Right ventricle myocardium superior (tissue), 1 donor: ENCODE measurements at regions of chrX and their contacts with region 1.

Region 1: DNA sequence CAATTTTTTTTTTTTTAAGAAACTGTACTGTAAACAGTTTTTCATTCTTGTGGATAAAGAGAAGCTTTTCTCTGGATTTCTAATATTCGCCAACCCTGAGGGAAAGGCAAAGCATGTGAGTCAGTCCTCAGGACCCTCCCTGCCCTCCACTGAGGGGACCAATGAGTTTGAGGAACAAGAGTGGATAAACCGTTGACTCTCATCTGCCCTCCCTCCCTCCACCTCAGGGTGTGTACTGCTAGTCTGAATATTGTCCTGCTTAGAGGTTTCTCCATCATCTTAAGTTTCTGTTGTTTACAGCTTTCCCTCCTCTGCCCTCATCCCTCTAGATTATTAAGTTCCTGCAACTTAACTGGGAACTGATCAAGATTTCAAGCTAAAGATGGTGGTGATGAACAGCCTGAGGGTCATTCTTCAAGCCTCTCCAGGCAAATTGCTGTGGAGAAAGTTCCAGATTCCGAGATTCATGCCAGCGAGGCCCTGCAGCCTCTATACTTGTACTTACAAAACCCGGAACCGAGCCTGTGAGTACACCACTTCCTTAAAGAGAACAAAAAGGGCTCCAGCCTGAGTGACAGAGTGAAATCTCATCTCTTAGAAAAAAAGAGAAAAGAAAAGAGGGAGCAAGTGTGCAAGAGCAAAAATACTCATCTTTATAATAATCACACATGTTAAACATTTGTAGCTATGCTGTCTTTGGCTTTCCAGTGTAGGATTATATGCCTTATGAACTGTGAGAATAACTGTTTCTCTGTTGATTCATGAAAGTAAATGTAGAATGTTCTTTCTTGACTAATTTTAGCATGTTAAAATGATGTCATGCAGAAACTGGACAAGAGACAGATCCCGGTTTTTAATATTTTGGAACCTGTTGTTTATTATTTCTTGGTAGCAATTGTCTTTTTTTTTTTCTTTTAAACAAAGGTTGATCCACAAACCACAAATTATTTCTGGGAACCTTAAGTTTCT is 11.9 kb downstream of the CA5B start:
- DNase-seq: peak; percentile 45
- ATAC-seq: peak; percentile 82

Region 2: DNA sequence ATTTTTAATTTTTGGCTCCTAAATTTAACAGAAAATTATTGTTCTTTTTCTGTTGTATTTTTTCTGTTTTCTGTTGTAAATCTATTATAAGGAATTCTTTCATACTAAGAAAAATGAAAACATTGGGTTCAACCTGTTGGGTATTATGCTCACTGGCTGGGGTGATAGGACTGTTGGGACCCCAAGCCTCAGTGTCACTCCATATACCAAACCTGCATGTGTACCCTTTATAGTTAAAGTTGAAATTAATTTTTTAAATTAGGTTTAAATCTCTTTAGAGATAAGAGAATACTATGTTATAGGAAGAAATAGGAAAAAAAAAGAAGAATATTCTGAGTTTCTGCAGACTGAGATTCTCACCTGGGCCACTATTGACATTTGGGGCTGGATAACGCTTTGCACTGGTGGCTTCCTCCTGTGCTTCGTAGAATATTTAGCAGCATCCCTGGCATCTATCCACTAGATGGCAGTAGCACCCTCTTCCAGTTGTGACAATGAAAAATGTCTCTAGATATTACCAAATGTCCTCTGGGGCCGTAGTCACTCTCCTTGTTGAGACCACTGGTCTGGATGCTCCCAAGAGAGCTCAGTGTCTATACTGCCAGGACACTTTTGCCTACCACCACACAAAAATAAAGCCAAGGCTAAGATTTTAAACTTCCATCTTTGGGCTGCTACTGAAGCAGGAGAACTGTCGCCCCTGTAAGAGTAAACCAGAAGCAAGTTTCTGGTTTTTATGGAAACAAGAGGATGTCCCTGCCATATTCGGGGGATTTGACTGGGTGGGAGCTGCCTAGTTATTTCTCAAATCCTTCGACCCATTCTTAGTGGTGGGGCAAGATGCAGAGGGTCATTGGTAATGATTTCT is 62.9 kb before region 1 on chrX:
- intact Hi-C with region 1: loop called (anchors 10 kb)
- DNase-seq: no peak
- ATAC-seq: peak; percentile 88